Posterior vena cava (tissue), 2 donors: ENCODE measurements at regions of chr15 and their contacts with region 1.

Region 1: GRCh38 chr15:92029761-92030160 is 176.3 kb downstream of the SLCO3A1 start:
- DNase-seq: no peak

Region 2: GRCh38 chr15:91578511-91578910 is 451.2 kb before region 1 on chr15:
- intact Hi-C with region 1: loop called in 1 of 2 experiments (anchors 5 kb)
- DNase-seq: no peak